ENCODE measurements at regions of chr1 and their contacts with region 1.

Region 1: GRCh38 chr1:155044812-155045690 is 6.1 kb upstream of the ADAM15 start:
- H3K4me3 Mint-ChIP-seq: no peak overlapping the region
- H3K27ac Mint-ChIP-seq: peak overlapping the region; percentile 42
- H3K4me1 Mint-ChIP-seq: peaks cover 26% of the 10 kb centered on the region
- H3K27me3 Mint-ChIP-seq: peaks cover 21% of the 10 kb centered on the region

Region 2: GRCh38 chr1:154479764-154480421 is 565.2 kb before region 1 on chr1:
- intact Hi-C with region 1: no loop called
- H3K4me3 Mint-ChIP-seq: no peak overlapping the region
- H3K27ac Mint-ChIP-seq: peak overlapping the region; percentile 18
- H3K4me1 Mint-ChIP-seq: peaks cover 32% of the 10 kb centered on the region
- H3K27me3 Mint-ChIP-seq: peaks cover 2% of the 10 kb centered on the region

Region 3: GRCh38 chr1:154955718-154956543 is 89.1 kb before region 1 on chr1 and contains the start of gene PBXIP1:
- intact Hi-C with region 1: no loop called
- H3K4me3 Mint-ChIP-seq: peak within 1 kb of the TSS; percentile 96
- H3K27ac Mint-ChIP-seq: peak within 1 kb of the TSS; percentile 92
- H3K4me1 Mint-ChIP-seq: peaks cover 85% of the 10 kb centered on the region
- H3K27me3 Mint-ChIP-seq: no peaks in the 10 kb centered on the region

Region 4: GRCh38 chr1:155063550-155064110 is 18.6 kb after region 1 on chr1 and contains the start of gene EFNA4:
- intact Hi-C with region 1: loop called (anchors 1 kb)
- H3K4me3 Mint-ChIP-seq: peak within 1 kb of the TSS; percentile 84
- H3K27ac Mint-ChIP-seq: peak within 1 kb of the TSS; percentile 68
- H3K4me1 Mint-ChIP-seq: peaks cover 72% of the 10 kb centered on the region
- H3K27me3 Mint-ChIP-seq: peaks cover 15% of the 10 kb centered on the region

Measured in dendritic cell treated with granulocyte-macrophage colony-stimulating factor and Interleukin-4, amounts not matched to agents 40 ng/mL and 50 ng/mL, for 4 days (primary cell).